Activated CD4-positive, alpha-beta memory T cell treated with anti-CD3 and anti-CD28 coated beads, Interleukin-2, amount 10 ng/mL, durations not matched to agents 7 days and 5 days (primary cell): ENCODE measurements at regions of chr2 and their contacts with region 1.

Region 1: GRCh38 chr2:170928824-170929685 is at the start of gene GORASP2:
- DNase-seq: peak; percentile 98
- H3K4me3 Mint-ChIP-seq: peak within 1 kb of the TSS; percentile 91
- H3K27ac Mint-ChIP-seq: peak within 1 kb of the TSS; percentile 93
- H3K4me1 Mint-ChIP-seq: peaks cover 45% of the 10 kb centered on the region
- H3K27me3 Mint-ChIP-seq: no peaks in the 10 kb centered on the region
- total RNA-seq, gene GORASP2: 58.7 to 67.0 TPM

Region 2: GRCh38 chr2:170940066-170940465 is 11.0 kb after region 1 on chr2:
- CTCF ChIA-PET with region 1: interaction called, 14 read pairs
- POLR2A ChIA-PET with region 1: interaction called, 26 read pairs
- DNase-seq: no peak
- H3K4me3 Mint-ChIP-seq: no peak overlapping the region
- H3K27ac Mint-ChIP-seq: no peak overlapping the region
- H3K4me1 Mint-ChIP-seq: peaks cover 26% of the 10 kb centered on the region
- H3K27me3 Mint-ChIP-seq: no peaks in the 10 kb centered on the region

Region 3: GRCh38 chr2:170973492-170974303 is 44.6 kb after region 1 on chr2:
- CTCF ChIA-PET with region 1: interaction called, 22 read pairs
- POLR2A ChIA-PET with region 1: interaction called, 8 read pairs
- DNase-seq: peak; percentile 82
- H3K4me3 Mint-ChIP-seq: peak overlapping the region; percentile 71
- H3K27ac Mint-ChIP-seq: no peak overlapping the region
- H3K4me1 Mint-ChIP-seq: peaks cover 7% of the 10 kb centered on the region
- H3K27me3 Mint-ChIP-seq: peaks cover 3% of the 10 kb centered on the region

Region 4: DNA sequence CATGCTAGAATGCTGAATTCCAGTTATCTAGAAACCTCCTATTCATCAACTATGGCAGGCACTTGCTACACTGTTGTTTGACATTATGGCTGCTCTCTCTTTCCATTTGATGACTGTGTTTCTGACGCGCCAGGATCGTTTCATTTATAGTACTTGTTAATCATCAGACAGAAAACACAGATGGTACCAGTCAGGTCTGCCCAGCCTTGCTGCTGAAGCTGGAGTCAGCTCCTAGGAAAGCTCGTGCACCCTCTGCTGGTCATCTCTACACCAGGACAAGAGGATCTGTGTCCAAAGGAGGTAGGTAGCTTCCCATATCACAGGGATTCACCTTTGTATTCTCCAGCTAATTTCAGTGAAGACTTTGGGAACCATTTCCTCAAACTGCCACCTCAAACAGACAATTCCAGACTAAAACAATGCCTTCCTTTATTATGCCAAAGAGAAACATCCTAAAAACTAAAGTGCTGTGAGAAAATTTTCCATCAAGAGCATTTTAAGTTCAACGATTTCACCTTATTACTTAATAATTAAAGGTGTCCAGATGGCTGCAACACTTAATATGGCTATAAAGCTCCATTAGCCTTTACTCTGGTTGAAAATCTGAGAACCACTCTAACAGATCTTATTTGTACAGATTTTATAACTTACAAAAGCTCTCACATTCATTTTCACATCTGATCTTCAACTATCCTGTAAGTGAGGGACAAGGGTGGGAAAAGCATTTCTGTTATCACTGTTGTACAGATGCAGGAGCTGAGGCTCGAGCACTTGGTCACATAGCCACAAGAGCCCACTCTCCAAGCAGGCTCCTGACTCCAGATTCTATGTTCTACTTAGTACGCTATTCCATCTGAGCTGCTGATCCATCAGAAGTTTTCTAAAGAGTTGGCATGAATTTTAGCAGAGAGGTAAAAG is 487.2 kb after region 1 on chr2:
- CTCF ChIA-PET with region 1: interaction called, 20 read pairs
- POLR2A ChIA-PET with region 1: interaction called, 10 read pairs
- DNase-seq: peak; percentile 81
- H3K4me3 Mint-ChIP-seq: no peak overlapping the region
- H3K27ac Mint-ChIP-seq: no peak overlapping the region
- H3K4me1 Mint-ChIP-seq: peaks cover 15% of the 10 kb centered on the region
- H3K27me3 Mint-ChIP-seq: no peaks in the 10 kb centered on the region